ENCODE measurements at regions of chr6 and their contacts with region 1.

Region 1: GRCh38 chr6:31143148-31143547 is 4.3 kb upstream of the PSORS1C2 start:
- H3K4me3 ChIP-seq: no peak overlapping the region
- H3K27ac ChIP-seq: no peak overlapping the region
- H3K4me1 ChIP-seq: no peaks in the 10 kb centered on the region
- CTCF ChIP-seq: no peak

Region 2: DNA sequence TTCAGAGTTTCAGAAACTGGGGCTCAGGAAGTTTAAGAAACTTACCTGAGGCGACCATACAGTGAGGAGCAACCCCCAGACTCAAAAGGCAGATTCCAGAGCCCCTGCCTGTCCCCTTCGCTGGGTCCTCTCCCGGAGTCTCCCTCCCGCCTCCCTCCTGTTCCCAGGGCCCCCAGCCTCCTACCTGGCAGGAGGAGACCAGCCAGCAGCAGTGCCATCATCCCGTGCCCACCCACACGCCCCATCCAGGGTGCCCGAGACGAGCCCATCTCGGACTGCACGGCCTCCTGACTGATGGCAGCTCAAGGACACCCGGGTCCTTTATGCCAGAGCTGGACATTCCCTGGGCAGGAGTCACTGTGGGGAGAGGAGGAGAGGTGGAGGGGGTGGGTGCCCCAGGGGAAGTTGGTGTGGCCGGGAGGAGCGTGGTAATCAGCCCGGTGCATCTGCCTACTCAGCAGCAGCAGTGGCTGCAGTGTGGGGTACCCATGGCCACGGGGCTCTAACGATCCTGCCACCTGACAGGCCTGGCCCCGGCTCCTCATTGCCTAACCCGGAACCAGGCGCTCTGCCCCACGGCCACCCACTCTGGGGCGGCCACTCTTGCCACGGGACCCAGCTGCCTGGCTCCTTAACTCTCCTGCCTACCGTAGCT is 22.9 kb before region 1 on chr6 and contains the start of gene CDSN:
- CTCF ChIA-PET with region 1: no interaction called
- POLR2A ChIA-PET with region 1: no interaction called
- H3K4me3 ChIP-seq: no peak within 1 kb of the TSS
- H3K27ac ChIP-seq: no peak within 1 kb of the TSS
- H3K4me1 ChIP-seq: peaks cover 9% of the 10 kb centered on the region
- CTCF ChIP-seq: no peak

Region 3: GRCh38 chr6:31158863-31159855 is 16.0 kb after region 1 on chr6:
- CTCF ChIA-PET with region 1: interaction called, 12 read pairs
- POLR2A ChIA-PET with region 1: interaction called, 7 read pairs
- H3K4me3 ChIP-seq: peak overlapping the region; percentile 62
- H3K27ac ChIP-seq: peak overlapping the region; percentile 70
- H3K4me1 ChIP-seq: peaks cover 9% of the 10 kb centered on the region
- CTCF ChIP-seq: peak; percentile 87

Measured in HEK293 (cell line).